Natural killer cell (primary cell): ENCODE measurements at regions of chr3 and their contacts with region 1.

Region 1: GRCh38 chr3:31550452-31551251 is 17.9 kb downstream of the STT3B start:
- DNase-seq: peak in 1 of 2 donors; percentile 70
- ATAC-seq: peak; percentile 66 to 81 (median 79)
- H3K4me3 ChIP-seq: no peak overlapping the region
- H3K4me3 Mint-ChIP-seq: no peak overlapping the region
- H3K27ac ChIP-seq: no peak overlapping the region
- H3K27ac Mint-ChIP-seq: peak overlapping the region; percentile 27 to 52
- H3K4me1 ChIP-seq: peaks cover 9% of the 10 kb centered on the region
- H3K4me1 Mint-ChIP-seq: peaks cover 66 to 70% of the 10 kb centered on the region in 2 donors
- H3K27me3 ChIP-seq: no peaks in the 10 kb centered on the region
- H3K27me3 Mint-ChIP-seq: no peaks in the 10 kb centered on the region
- CTCF ChIP-seq: peak; percentile 79

Region 2: GRCh38 chr3:31531992-31532586 is 18.6 kb before region 1 on chr3:
- intact Hi-C with region 1: loop called (anchors 2 kb)
- DNase-seq: peak; percentile 97 to 99
- ATAC-seq: peak; percentile 84 to 95 (median 85)
- H3K4me3 ChIP-seq: peak overlapping the region; percentile 97
- H3K4me3 Mint-ChIP-seq: peak overlapping the region; percentile 99
- H3K27ac ChIP-seq: peak overlapping the region; percentile 96
- H3K27ac Mint-ChIP-seq: peak overlapping the region; percentile 94 to 99
- H3K4me1 ChIP-seq: peaks cover 6% of the 10 kb centered on the region
- H3K4me1 Mint-ChIP-seq: peaks cover 30 to 33% of the 10 kb centered on the region in 2 donors
- H3K27me3 ChIP-seq: no peaks in the 10 kb centered on the region
- H3K27me3 Mint-ChIP-seq: no peaks in the 10 kb centered on the region
- CTCF ChIP-seq: no peak

Region 3: DNA sequence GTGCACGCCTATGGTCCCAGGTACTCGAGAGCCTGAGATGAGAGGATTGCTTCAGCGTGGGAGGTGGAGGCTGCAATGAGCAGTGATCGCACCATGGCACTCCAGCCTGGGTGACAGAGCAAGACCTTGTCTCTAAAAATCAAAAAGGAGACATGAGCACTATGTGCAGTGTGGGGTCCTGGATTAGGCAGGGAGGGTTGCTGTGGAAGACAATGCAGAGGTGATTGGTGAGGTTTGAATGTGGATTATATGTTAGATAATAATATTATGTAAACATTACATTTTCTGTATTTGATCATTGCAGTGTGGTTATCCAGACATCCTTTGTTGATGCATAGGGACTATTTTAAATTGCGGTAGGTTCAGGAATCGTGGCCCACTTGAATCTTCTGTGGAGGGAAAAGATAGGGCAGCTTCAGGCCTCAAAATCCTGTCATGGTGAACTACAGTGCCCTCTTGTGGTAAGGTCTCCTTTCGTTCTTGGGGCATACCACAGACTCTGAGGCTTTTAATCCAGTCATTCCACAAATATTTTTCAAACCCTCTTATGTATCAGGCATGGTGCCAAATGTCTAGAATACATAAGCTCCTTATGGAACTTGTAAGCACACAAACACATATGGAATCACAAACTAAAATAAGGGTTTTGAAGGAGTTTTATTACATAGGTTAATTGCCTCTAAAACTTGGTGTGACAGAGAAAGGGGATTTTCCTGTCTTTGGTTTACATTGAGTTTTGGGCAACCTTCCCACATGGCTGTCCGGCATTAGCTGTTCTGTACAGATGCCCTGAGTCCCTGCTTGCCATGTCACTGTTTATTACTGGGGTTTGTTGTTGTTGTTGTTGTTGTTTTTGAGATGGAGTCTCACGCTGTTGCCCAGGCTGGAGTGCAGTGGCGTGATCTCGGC is 593.5 kb after region 1 on chr3:
- intact Hi-C with region 1: loop called (anchors 10 kb)
- DNase-seq: peak in 1 of 2 donors; percentile 84
- ATAC-seq: peak; percentile 68 to 77 (median 72)
- H3K4me3 ChIP-seq: no peak overlapping the region
- H3K4me3 Mint-ChIP-seq: no peak overlapping the region
- H3K27ac ChIP-seq: no peak overlapping the region
- H3K27ac Mint-ChIP-seq: no peak overlapping the region
- H3K4me1 ChIP-seq: no peaks in the 10 kb centered on the region
- H3K4me1 Mint-ChIP-seq: peaks cover under 1 to 6% of the 10 kb centered on the region in 2 donors
- H3K27me3 ChIP-seq: no peaks in the 10 kb centered on the region
- H3K27me3 Mint-ChIP-seq: no peaks in the 10 kb centered on the region
- CTCF ChIP-seq: peak; percentile 84